ENCODE measurements at regions of chr2 and their contacts with region 1.

Region 1: DNA sequence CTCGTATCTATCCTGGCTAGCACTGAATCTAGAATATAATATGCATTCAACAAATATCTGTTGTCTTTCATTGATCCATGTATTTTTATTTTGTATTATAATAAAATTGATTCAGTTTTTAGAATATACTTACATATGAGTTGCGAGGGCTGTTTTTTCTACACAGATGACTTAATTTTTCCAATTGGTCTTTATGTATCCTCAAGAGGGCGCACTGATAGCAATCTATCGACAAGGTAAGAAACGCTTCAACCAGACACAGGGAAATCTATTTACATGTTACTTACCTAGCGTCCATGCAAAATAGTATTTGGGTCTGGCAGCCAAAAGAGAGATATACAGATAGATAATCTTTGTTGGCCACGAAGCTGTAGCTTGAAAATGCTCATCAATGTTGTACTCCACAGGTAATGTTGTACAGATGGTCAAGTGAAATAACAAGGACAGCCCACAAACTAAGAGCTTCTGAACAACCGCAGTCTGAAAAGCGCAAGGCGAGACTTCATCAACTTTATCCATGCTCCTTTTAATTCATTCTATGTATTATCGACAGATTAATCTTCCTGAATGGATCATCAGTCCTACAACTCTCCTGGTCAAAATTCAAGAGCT is 35.5 kb upstream of the KIDINS220 start:
- DNase-seq: peak; percentile 17
- ATAC-seq: peak; percentile 80
- H3K4me3 ChIP-seq: no peak overlapping the region
- H3K27ac ChIP-seq: no peak overlapping the region
- H3K4me1 ChIP-seq: peaks cover 10% of the 10 kb centered on the region; the same call in 1 of the 2 replicates
- H3K27me3 ChIP-seq: no peaks in the 10 kb centered on the region
- CTCF ChIP-seq: peak; percentile 54 to 62 (median 61)
- EP300 ChIP-seq: no peak
- POLR2A ChIP-seq: no peak
- RAD21 ChIP-seq: peak; percentile 65

Region 2: DNA sequence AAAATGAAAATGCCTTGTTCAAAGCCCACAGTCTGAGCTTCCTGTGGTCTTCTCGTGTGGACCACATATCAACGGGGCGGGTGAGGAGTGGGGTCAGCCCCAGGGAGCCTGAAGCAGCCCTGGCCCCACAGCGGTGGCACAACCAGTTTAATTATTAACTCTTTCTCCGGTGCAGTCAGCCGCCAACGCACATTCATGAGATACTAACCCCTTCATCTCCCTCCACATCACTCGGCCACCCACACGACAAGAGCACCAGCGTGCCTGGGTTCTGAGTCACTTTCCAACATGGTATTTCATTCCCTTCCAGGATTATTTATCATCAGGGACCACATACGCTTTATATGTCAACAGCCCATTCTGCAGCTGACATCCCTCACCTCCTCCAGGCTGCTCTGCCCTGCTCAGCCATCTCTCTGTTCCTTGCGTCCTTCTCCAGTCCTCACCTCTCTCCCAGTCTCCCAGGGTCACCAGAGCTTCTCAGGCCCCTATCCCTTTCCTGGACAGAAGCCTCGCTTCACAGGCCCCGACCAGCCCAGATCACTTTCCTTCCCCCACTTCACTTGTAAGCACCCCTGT is 239.1 kb before region 1 on chr2:
- CTCF ChIA-PET with region 1: no interaction called
- POLR2A ChIA-PET with region 1: no interaction called
- RAD21 ChIA-PET with region 1: no interaction called
- SMC1A ChIA-PET with region 1: no interaction called
- in situ Hi-C with region 1: no loop called
- intact Hi-C with region 1: no loop called
- DNase-seq: no peak
- ATAC-seq: peak; percentile 75
- H3K4me3 ChIP-seq: no peak overlapping the region
- H3K27ac ChIP-seq: no peak overlapping the region
- H3K4me1 ChIP-seq: peaks cover 2% of the 10 kb centered on the region; the same call in 1 of the 2 replicates
- H3K27me3 ChIP-seq: no peaks in the 10 kb centered on the region; a peak in 1 of 4 replicates
- CTCF ChIP-seq: no peak
- EP300 ChIP-seq: no peak
- POLR2A ChIP-seq: no peak
- RAD21 ChIP-seq: no peak

Region 3: DNA sequence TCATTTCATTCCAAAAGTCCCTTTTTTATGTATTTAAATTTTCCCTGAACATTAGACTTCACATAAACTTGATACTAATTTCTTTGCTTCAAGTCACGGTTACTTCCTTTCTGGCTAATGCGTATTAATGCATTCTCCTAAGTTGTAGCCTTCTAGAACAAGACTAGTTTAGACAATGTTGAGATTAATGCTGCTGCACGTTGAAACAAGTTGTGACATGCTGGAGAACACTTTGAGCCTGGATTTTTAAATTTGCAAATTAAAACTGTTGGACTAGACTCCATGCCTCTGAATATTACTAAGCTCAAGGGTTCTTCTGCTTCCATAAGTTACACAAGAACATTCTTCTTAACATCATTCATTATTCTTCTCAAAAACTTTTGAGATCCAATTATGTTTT is 162.0 kb before region 1 on chr2:
- CTCF ChIA-PET with region 1: no interaction called
- POLR2A ChIA-PET with region 1: no interaction called
- RAD21 ChIA-PET with region 1: no interaction called
- SMC1A ChIA-PET with region 1: no interaction called
- in situ Hi-C with region 1: no loop called
- intact Hi-C with region 1: no loop called
- DNase-seq: no peak
- ATAC-seq: no peak
- H3K4me3 ChIP-seq: no peak overlapping the region
- H3K27ac ChIP-seq: no peak overlapping the region
- H3K4me1 ChIP-seq: no peaks in the 10 kb centered on the region
- H3K27me3 ChIP-seq: no peaks in the 10 kb centered on the region
- CTCF ChIP-seq: no peak
- EP300 ChIP-seq: no peak
- POLR2A ChIP-seq: no peak
- RAD21 ChIP-seq: no peak

Region 4: DNA sequence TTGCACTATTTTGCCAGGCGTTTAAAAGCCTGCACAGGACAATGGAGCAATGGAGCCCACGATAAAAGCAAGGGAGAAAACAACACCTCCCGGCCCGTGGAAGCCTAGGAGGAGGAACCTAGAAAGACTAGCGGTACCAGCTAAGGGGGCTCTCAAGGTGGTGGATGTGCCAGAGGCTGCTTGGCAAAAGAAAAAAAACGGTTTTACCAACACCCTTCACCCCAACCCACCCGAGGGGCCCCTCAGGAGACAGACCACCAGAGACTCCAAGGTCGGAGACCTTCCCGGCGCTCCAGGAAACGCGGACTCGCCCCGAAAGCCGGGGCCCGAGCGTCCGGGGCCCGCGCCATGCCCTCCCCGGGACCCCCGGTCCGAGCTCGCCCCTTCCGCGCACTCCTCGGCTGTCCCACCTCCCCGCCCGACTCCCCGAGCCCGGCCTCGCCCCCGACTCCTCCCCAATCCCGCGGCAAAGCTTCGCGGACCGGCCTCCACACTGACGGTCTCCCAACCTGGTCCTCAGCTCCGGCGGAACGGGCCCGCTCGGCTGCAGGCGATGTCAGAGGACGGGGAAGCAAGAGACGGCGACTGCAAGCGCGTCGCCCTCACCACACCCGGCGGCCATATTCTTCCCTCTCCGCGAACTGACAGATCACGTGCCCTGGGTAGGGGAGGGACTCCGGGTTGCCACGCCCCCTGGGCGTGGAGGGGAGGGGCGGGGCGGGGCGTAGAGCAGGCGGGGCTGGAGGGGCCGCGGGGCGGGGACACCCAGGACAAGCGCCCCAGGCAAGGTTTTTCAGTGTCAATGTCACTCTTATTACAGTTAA is 35.7 kb before region 1 on chr2 and contains the start of gene KIDINS220:
- CTCF ChIA-PET with region 1: no interaction called
- POLR2A ChIA-PET with region 1: no interaction called
- RAD21 ChIA-PET with region 1: no interaction called
- SMC1A ChIA-PET with region 1: no interaction called
- in situ Hi-C with region 1: no loop called
- intact Hi-C with region 1: no loop called
- DNase-seq: peak; percentile 43
- ATAC-seq: peak; percentile 94
- H3K4me3 ChIP-seq: peak within 1 kb of the TSS; percentile 98
- H3K27ac ChIP-seq: no peak within 1 kb of the TSS
- H3K4me1 ChIP-seq: no peaks in the 10 kb centered on the region
- H3K27me3 ChIP-seq: no peaks in the 10 kb centered on the region
- CTCF ChIP-seq: no peak
- EP300 ChIP-seq: no peak
- POLR2A ChIP-seq: peak; percentile 98
- RAD21 ChIP-seq: no peak
- polyA plus RNA-seq, gene KIDINS220: 6.0 to 8.0 TPM

Region 5: DNA sequence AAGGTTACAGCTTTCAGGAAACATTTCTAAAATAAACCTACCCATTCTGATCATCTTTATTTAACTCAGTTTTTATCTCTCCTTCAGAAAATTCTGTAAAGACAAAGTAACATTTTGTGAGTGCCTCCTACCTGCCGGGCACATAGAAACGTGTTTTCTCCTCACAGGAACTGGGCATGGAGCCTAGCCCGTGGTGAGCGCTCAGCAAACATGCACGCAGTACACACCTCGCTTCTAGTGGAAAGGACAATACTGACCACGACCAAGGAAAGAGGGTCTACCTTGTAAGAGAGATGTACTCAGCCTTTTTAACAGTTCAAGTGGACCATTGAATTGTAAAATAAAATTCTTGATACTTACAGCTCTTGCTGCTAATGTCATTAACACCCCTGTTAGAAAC is 10.7 kb before region 1 on chr2:
- CTCF ChIA-PET with region 1: interaction called, 20 read pairs
- POLR2A ChIA-PET with region 1: interaction called, 3 read pairs
- RAD21 ChIA-PET with region 1: interaction called, 3 read pairs
- SMC1A ChIA-PET with region 1: interaction called, 3 read pairs
- in situ Hi-C with region 1: no loop called
- intact Hi-C with region 1: no loop called
- DNase-seq: no peak
- ATAC-seq: no peak
- H3K4me3 ChIP-seq: no peak overlapping the region
- H3K27ac ChIP-seq: no peak overlapping the region
- H3K4me1 ChIP-seq: no peaks in the 10 kb centered on the region
- H3K27me3 ChIP-seq: no peaks in the 10 kb centered on the region
- CTCF ChIP-seq: no peak
- EP300 ChIP-seq: no peak
- POLR2A ChIP-seq: no peak
- RAD21 ChIP-seq: no peak

Region 6: GRCh38 chr2:9003616-9004337 is 130.8 kb after region 1 on chr2 and contains the start of gene MBOAT2:
- CTCF ChIA-PET with region 1: interaction called, 4 read pairs
- POLR2A ChIA-PET with region 1: no interaction called
- RAD21 ChIA-PET with region 1: interaction called, 4 read pairs
- SMC1A ChIA-PET with region 1: interaction called, 5 read pairs
- in situ Hi-C with region 1: no loop called
- intact Hi-C with region 1: loop called (anchors 5 kb)
- DNase-seq: peak; percentile 43
- ATAC-seq: peak; percentile 92
- H3K4me3 ChIP-seq: peak within 1 kb of the TSS; percentile 71
- H3K27ac ChIP-seq: peak within 1 kb of the TSS; percentile 66
- H3K4me1 ChIP-seq: no peaks in the 10 kb centered on the region; the same call in 1 of the 2 replicates
- H3K27me3 ChIP-seq: no peaks in the 10 kb centered on the region; a peak in 1 of 4 replicates
- CTCF ChIP-seq: no peak
- EP300 ChIP-seq: no peak
- POLR2A ChIP-seq: peak; percentile 79
- RAD21 ChIP-seq: no peak
- polyA plus RNA-seq, gene MBOAT2: 0.08 to 1.3 TPM

Region 7: DNA sequence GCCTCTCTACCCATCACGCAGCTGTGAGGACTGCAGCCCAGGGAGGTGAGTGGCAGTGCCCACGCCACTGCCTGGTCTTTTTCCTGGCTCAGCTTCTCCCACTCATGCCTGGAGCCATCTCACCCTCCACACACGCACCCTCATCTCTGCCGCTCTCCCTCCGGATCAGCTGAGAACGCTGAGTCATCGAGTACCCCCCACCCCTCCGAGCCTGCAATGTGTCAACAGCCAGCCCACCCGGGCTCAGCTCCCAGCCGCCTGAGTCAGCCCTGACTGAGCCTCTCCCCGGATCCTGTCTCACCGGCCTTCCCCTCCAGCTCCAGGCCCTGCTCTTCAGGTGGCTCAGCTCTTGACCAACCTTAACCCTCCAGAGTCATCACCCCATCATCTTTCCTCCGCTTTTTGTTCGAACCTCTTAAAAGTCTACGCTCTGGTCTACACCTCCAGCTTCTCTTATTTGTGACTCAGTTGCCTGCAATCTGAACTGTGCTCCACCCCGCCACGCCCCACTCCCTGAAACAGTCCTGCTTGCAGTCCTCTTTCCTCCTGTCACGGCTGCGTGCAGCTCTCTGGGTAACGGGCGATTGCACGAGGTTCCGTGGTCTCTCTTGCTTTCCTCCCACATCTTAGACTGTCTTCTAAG is 239.3 kb after region 1 on chr2:
- CTCF ChIA-PET with region 1: interaction called, 47 read pairs
- POLR2A ChIA-PET with region 1: no interaction called
- RAD21 ChIA-PET with region 1: interaction called, 18 read pairs
- SMC1A ChIA-PET with region 1: interaction called, 21 read pairs
- in situ Hi-C with region 1: no loop called
- intact Hi-C with region 1: loop called (anchors 1 kb)
- DNase-seq: no peak
- ATAC-seq: no peak
- H3K4me3 ChIP-seq: no peak overlapping the region
- H3K27ac ChIP-seq: no peak overlapping the region
- H3K4me1 ChIP-seq: no peaks in the 10 kb centered on the region
- H3K27me3 ChIP-seq: no peaks in the 10 kb centered on the region; a peak in 1 of 4 replicates
- CTCF ChIP-seq: no peak
- EP300 ChIP-seq: no peak
- POLR2A ChIP-seq: no peak
- RAD21 ChIP-seq: no peak

Region 8: DNA sequence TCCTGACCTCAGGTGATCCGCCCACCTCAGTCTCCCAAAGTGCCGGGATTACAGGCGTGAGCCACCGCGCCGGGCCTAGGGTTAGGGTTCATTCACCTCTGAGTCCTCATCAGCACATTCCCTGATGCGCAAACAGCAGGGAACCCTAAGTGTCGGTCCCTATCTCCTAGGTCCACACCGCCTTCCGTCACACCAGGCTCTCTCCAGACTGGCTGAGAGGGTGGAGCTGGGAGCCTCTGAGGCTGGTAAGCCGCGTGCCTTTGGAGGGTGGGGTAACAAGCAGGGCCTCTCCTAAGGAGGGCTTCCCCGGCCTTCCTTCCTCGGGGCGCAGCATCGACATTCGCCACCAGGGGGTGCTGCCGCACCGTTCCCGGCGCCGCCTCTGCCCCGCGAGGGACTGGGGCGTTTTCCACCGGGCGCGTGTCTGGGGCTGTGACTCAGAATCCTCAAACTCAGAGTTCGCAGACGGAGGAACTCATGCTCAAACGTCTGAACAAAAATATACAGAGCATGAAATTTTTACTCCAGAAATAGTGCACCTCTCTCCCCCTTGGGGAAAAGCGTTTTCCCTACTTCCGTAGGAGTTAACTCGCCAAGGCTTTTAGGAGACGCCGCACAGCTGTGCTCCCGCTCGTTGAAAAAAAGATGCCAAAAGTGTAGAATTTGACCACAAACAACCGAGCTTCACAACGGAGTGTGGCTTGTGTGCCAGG is 269.8 kb after region 1 on chr2:
- CTCF ChIA-PET with region 1: interaction called, 98 read pairs
- POLR2A ChIA-PET with region 1: interaction called, 7 read pairs
- RAD21 ChIA-PET with region 1: interaction called, 11 read pairs
- SMC1A ChIA-PET with region 1: interaction called, 21 read pairs
- in situ Hi-C with region 1: loop called (anchors 5 kb)
- intact Hi-C with region 1: loop called (anchors 1 kb)
- DNase-seq: no peak
- ATAC-seq: peak; percentile 94
- H3K4me3 ChIP-seq: no peak overlapping the region; the same call in 1 of the 2 replicates
- H3K27ac ChIP-seq: no peak overlapping the region
- H3K4me1 ChIP-seq: no peaks in the 10 kb centered on the region
- H3K27me3 ChIP-seq: no peaks in the 10 kb centered on the region; a peak in 1 of 4 replicates
- CTCF ChIP-seq: peak; percentile 90 to 98 (median 96)
- EP300 ChIP-seq: no peak
- POLR2A ChIP-seq: no peak
- RAD21 ChIP-seq: peak; percentile 90

Region 9: GRCh38 chr2:9644603-9645002 is 771.7 kb after region 1 on chr2:
- CTCF ChIA-PET with region 1: no interaction called
- POLR2A ChIA-PET with region 1: no interaction called
- RAD21 ChIA-PET with region 1: no interaction called
- SMC1A ChIA-PET with region 1: no interaction called
- in situ Hi-C with region 1: no loop called
- intact Hi-C with region 1: no loop called
- DNase-seq: no peak
- ATAC-seq: no peak
- H3K4me3 ChIP-seq: no peak overlapping the region
- H3K27ac ChIP-seq: no peak overlapping the region
- H3K4me1 ChIP-seq: peaks cover 17% of the 10 kb centered on the region
- H3K27me3 ChIP-seq: peaks cover 3 to 4% of the 10 kb centered on the region in 2 experiments; a peak in 3 of 4 replicates
- CTCF ChIP-seq: no peak
- EP300 ChIP-seq: no peak
- POLR2A ChIP-seq: no peak
- RAD21 ChIP-seq: no peak

Measured in GM12878 (cell line).